HepG2 (cell line): ENCODE measurements at regions of chr5 and their contacts with region 1.

Region 1: DNA sequence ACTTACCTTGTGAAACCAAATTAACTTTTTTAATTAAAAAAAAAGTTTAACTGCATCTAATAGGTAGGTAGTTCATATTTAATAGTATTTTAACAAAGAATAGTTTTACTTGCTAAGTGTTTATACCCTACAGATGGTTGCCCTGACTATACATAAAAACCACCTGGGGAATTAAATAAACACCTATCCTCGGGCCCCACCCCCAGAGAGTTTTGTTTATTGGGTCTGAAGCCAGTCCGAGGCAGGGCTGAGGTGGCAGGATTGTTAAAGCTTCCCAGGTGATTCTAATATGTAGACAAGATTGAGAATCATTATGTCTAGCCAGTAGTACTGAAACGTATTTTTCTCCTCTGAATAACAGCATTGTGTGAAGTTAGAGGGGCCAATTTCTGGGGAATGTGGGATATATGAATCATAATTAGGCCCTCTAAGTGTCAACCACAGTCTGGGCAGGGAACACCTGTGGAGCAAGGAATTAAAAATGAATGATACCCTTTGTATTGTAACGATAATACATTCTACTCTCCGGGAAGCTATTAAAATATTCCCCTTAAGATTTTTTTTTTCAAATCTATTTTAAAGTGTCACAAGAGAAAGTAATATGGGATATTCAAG is 5.6 kb upstream of the PAM start:
- DNase-seq: no peak
- ATAC-seq: no peak
- H3K4me3 ChIP-seq: no peak overlapping the region
- H3K27ac ChIP-seq: no peak overlapping the region
- H3K4me1 ChIP-seq: peaks cover 8% of the 10 kb centered on the region
- H3K27me3 ChIP-seq: peaks cover 1 to 14% of the 10 kb centered on the region in 2 experiments; a peak in 4 of 5 replicates
- CTCF ChIP-seq: no peak
- EP300 ChIP-seq: no peak
- POLR2A ChIP-seq: no peak
- RAD21 ChIP-seq: no peak

Region 2: GRCh38 chr5:102691434-102691833 is 58.1 kb before region 1 on chr5:
- CTCF ChIA-PET with region 1: no interaction called
- POLR2A ChIA-PET with region 1: no interaction called
- in situ Hi-C with region 1: no loop called
- intact Hi-C with region 1: loop called (anchors 1 kb)
- DNase-seq: no peak
- ATAC-seq: no peak
- H3K4me3 ChIP-seq: no peak overlapping the region
- H3K27ac ChIP-seq: no peak overlapping the region
- H3K4me1 ChIP-seq: 0 out of 2 replicates have a peak, but pooled peaks cover 9% of the 10 kb centered on the region
- H3K27me3 ChIP-seq: peaks cover 0 to 3% of the 10 kb centered on the region in 2 experiments; a peak in 2 of 5 replicates
- CTCF ChIP-seq: no peak
- EP300 ChIP-seq: no peak
- POLR2A ChIP-seq: no peak
- RAD21 ChIP-seq: no peak

Region 3: GRCh38 chr5:103612545-103612944 is 863.0 kb after region 1 on chr5:
- CTCF ChIA-PET with region 1: no interaction called
- POLR2A ChIA-PET with region 1: no interaction called
- in situ Hi-C with region 1: no loop called
- intact Hi-C with region 1: no loop called
- DNase-seq: no peak
- ATAC-seq: no peak
- H3K4me3 ChIP-seq: no peak overlapping the region
- H3K27ac ChIP-seq: no peak overlapping the region
- H3K4me1 ChIP-seq: no peaks in the 10 kb centered on the region
- H3K27me3 ChIP-seq: no peaks in the 10 kb centered on the region
- CTCF ChIP-seq: no peak
- EP300 ChIP-seq: no peak
- POLR2A ChIP-seq: no peak
- RAD21 ChIP-seq: no peak